Right ventricle myocardium inferior (tissue), 1 donor: ENCODE measurements at regions of chr5 and their contacts with region 1.

Region 1: GRCh38 chr5:90434116-90434714 is 24.7 kb upstream of the CETN3 start:
- DNase-seq: no peak
- ATAC-seq: no peak

Region 2: GRCh38 chr5:90575712-90576111 is 141.5 kb after region 1 on chr5:
- intact Hi-C with region 1: no loop called
- DNase-seq: no peak
- ATAC-seq: no peak

Region 3: GRCh38 chr5:90606539-90606938 is 172.3 kb after region 1 on chr5:
- intact Hi-C with region 1: loop called (anchors 10 kb)
- DNase-seq: no peak
- ATAC-seq: no peak